ENCODE measurements at regions of chr10 and their contacts with region 1.

Region 1: DNA sequence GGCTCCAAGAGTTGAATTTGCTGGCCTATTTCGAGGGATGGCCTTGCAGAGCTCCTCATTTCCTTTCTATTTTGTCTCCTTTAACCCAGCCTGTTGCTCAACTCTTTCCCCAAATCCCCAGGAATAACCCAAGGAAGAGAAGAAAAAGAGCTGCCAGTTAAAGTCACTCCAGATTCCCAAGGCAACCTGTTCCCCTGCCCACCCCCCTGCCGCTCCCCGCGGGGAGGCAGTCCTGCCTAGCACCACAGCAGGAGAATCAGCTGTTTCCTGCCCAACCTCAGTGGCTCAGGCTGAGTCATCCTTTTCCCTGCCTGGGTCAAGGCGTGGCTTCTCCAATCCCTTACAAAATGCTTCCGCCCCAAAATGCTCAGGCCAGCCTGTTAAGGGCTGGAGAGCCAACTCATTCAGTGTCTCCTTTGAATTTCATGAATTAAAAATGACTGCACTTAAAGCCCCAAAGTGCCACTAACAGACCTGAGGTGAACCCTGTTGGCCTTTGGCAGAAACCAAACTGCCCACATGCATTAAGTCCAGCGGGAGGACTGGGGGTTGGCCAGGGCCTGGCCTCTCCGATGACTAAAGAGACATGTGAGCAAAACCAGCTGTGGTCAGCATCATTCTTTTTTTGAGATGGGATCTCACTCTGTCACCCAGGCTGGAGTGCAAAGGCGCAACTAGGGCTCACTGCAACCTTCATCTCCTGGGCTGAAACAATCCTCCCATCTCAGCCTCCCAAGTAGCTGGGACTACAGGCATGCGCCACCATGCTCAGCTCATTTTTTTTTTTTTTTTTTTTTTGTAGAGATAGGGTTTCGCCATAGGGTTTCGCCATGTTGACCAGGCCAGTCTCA is 83.2 kb upstream of the KIF5B start:
- DNase-seq: peak; percentile 90

Region 2: DNA sequence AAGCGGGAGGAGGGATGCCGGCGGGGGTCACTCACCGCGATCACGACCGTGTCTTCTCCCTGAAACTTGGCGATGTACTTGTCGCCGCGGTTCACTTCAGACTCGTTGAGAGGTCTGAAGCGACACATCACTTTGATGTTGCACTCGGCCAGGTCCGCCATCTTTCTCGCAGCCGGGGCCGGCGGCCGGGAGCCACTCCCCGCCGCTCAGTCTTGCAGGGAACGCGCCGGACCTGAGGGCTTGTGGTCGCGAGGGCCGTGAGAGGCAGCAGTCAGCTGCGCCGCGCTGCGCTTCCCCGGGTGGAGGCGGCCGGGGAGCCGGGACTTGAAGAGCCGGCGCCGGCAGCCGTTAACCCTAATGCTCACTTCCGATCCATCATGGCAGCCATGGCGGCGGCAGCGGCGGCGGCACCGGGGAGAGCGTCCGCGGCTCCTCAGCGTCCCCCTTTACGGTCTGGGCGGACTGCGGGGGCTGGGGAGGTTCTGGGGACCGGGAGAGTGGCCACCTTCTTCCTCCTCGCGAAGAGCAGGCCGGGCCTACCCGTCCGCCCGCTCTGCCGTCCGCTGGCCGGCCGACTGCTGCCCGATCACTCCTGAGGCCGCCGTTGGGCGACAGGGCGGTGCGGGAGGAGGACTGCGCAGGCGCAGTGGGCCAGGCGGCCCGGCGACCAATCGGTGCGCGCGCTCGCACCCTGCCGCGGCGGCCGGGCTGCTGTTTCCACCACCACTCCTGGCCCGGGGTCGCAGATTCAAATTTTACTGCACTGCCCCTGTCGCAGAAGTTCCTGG is 83.4 kb before region 1 on chr10 and contains the start of gene KIF5B:
- intact Hi-C with region 1: loop called (anchors 5 kb)
- DNase-seq: peak; percentile 95
- total RNA-seq, gene KIF5B: 181 TPM

Region 3: DNA sequence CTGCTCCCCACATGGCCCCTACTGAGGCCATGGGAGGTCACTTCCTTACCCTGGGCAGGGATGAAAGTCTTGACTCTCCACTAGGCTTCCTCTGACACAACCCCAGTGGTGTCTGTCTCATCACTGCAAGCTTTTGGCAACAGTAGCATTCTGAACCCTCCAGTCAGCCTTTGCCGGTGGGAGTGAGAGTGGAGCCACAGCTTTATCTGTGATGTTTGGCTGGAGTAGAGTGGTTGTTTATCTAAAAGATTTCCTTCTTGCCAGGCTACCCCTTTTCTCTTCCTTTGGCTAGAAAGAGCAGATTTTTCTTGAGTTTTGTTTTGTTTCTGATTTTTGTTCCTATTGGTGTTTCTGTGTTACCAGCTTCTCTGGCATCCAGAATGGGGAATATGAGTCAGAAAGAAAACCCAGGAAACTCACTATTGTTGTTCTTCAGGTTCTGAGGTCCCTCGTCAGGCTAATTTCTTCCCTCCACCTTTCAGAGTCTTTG is 15.6 kb after region 1 on chr10:
- intact Hi-C with region 1: no loop called
- DNase-seq: no peak

Region 4: DNA sequence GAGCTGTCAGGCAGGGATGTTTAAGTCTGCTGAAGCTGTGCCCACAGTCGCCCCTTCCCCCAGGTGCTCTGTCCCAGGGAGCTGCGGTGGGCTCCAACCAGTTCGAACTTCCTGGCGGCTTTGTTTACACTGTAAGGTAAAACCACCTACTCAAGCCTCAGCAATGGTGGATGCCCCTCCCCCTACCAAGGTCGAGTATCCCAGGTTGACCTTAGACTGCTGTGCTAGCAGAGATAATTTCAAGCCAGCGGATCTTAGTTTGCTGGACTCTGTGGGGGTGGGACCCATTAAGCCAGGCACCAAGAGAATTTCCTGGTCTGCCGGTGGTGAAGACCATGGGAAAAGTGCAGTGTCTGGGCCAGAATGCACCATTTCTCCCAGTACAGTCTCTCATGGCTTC is 362.4 kb after region 1 on chr10:
- intact Hi-C with region 1: no loop called
- DNase-seq: no peak